ENCODE measurements at regions of chr12 and their contacts with region 1.

Region 1: DNA sequence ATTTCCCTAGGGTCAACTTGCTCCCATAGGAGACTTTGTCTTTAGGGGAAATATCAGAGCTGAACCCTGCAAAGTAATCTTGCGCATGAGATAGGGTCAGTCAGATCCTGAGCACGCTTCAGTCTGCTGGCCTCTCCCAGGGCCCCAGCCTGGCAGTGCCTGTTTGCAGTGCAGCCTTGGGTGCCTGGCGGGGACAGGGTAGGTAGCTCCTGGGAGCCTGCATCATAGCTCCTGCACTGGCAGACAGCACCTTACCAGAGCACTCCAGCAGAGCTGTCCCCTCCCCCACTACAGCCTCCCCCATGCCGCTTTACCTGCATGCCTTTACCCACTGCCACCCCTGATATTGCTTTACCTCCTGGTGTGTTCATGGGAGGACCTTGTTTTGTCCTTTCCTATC is 237.3 kb downstream of the CCDC59 start:
- DNase-seq: peak; percentile 59
- H3K4me3 ChIP-seq: no peak overlapping the region
- H3K27ac ChIP-seq: no peak overlapping the region
- H3K4me1 ChIP-seq: no peaks in the 10 kb centered on the region
- H3K27me3 ChIP-seq: no peaks in the 10 kb centered on the region
- CTCF ChIP-seq: no peak
- POLR2A ChIP-seq: no peak

Region 2: GRCh38 chr12:81992461-81992860 is 128.4 kb before region 1 on chr12:
- intact Hi-C with region 1: no loop called
- DNase-seq: no peak
- H3K4me3 ChIP-seq: no peak overlapping the region
- H3K27ac ChIP-seq: no peak overlapping the region
- H3K4me1 ChIP-seq: no peaks in the 10 kb centered on the region
- H3K27me3 ChIP-seq: no peaks in the 10 kb centered on the region
- CTCF ChIP-seq: peak in 3 of 11 experiments; percentile 18 to 29 (median 25)
- POLR2A ChIP-seq: no peak

Region 3: DNA sequence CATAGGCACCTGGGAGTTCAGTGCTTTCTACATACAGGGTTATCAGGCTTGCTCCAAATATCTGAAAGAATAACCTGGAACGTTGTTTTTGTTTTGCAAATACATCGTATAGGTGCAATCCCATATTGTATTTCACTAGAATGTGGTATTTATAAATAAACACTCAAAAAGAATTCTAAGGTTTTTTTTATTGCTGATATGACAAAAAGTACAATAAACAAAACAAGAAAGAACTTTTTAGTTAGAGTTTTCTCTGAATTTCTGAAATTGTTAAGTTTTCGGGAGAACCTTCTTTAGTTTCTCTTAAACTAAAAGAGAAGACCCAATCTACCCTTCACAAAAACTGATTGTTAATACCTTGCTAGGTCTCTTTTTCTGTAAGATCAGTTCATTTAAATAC is 11.5 kb after region 1 on chr12:
- intact Hi-C with region 1: loop called (anchors 2 kb)
- DNase-seq: no peak
- H3K4me3 ChIP-seq: no peak overlapping the region
- H3K27ac ChIP-seq: no peak overlapping the region
- H3K4me1 ChIP-seq: no peaks in the 10 kb centered on the region
- H3K27me3 ChIP-seq: no peaks in the 10 kb centered on the region
- CTCF ChIP-seq: no peak
- POLR2A ChIP-seq: no peak